ENCODE measurements at regions of chr15 and their contacts with region 1.

Region 1: DNA sequence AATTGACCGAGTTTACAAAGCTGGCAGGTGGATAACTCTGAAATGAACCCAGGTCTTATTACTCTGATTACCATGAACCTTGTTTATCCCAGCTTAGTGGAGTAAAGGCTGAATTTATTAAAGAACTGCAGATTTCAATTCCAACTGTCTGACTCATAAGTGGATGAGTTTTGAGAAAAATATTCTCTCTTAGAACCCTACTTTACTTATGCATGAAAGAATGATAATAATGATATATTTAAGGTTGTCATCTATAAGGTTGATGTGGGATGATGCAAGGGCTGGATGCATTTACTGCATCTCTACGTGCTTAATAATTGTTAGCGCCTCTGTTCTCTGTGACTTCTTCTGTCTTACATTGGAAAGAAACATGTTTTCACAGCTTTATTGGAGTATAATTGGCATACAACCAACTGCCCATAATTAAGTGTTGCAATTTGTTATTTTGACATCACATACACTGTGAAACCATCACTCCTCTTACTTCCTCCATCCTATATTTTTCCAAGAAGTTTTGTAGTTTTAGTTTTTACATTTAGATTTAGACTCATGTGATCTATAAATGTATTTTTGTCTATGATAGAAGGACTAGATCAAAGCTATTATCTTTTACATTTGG is 771.2 kb upstream of the ARRDC4 start:
- DNase-seq: no peak
- ATAC-seq: no peak
- H3K4me3 ChIP-seq: no peak overlapping the region
- H3K27ac ChIP-seq: no peak overlapping the region
- H3K4me1 ChIP-seq: no peaks in the 10 kb centered on the region
- H3K27me3 ChIP-seq: no peaks in the 10 kb centered on the region
- CTCF ChIP-seq: no peak
- EP300 ChIP-seq: no peak
- POLR2A ChIP-seq: no peak
- RAD21 ChIP-seq: no peak

Region 2: DNA sequence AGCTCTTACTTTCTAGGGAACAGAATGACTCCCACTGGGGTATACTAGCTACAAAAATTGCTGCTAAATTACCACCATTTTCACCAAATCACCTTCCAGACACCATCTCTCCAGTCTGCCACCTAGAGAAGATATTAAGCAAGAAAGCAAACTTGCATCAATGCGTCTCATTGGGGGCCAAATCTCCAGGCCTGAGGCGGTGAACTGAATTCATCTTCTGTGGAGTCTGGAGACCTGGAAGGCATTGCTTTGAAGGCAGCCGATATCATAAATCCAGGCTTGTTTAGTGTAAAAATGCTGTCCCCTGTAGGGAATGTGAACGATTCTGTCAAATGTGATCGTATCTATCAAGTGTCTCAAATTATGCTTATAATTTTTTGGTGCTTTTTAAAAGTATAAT is 23.0 kb after region 1 on chr15:
- CTCF ChIA-PET with region 1: interaction called, 5 read pairs
- POLR2A ChIA-PET with region 1: interaction called, 4 read pairs
- RAD21 ChIA-PET with region 1: interaction called, 7 read pairs
- SMC1A ChIA-PET with region 1: interaction called, 12 read pairs
- in situ Hi-C with region 1: no loop called
- intact Hi-C with region 1: no loop called
- DNase-seq: no peak
- ATAC-seq: no peak
- H3K4me3 ChIP-seq: no peak overlapping the region
- H3K27ac ChIP-seq: no peak overlapping the region
- H3K4me1 ChIP-seq: no peaks in the 10 kb centered on the region
- H3K27me3 ChIP-seq: no peaks in the 10 kb centered on the region
- CTCF ChIP-seq: no peak
- EP300 ChIP-seq: no peak
- POLR2A ChIP-seq: no peak
- RAD21 ChIP-seq: no peak

Measured in GM12878 (cell line).